ENCODE measurements at regions of chr13 and their contacts with region 1.

Region 1: DNA sequence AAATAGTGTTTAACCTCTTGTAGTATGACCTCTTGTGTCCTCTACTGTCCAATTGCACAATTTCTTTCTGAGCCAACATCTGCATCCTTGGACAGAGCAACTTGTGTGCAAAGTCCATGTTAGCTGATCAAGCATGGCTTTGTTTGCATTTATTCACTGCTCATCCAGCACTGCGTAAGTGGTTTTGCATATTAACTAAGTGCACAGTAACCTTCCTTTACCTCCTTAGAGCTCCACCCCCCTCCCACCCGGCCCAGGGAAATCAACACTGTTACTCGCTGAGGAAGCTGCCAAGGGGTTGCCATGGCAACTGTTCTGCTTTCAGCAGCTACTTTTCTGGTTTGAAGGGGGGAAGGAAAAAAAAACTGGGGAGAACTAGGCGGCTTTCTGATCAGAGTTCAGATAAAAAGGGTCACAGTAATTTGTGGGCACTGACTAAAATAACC is 153.5 kb upstream of the KLF12 start:
- DNase-seq: peak in 1 of 2 experiments; percentile 14
- H3K4me3 ChIP-seq: no peak overlapping the region
- H3K27ac ChIP-seq: no peak overlapping the region
- H3K4me1 ChIP-seq: no peaks in the 10 kb centered on the region
- H3K27me3 ChIP-seq: no peaks in the 10 kb centered on the region
- CTCF ChIP-seq: no peak

Region 2: GRCh38 chr13:73081256-73081915 is 1206.4 kb before region 1 on chr13:
- CTCF ChIA-PET with region 1: interaction called, 11 read pairs
- POLR2A ChIA-PET with region 1: no interaction called
- intact Hi-C with region 1: no loop called
- DNase-seq: no peak
- H3K4me3 ChIP-seq: no peak overlapping the region
- H3K27ac ChIP-seq: 0 out of 2 replicates have a peak overlapping the region, but pooled peaks have one; percentile 17
- H3K4me1 ChIP-seq: no peaks in the 10 kb centered on the region
- H3K27me3 ChIP-seq: no peaks in the 10 kb centered on the region
- CTCF ChIP-seq: no peak

Region 3: GRCh38 chr13:73835138-73835721 is 452.5 kb before region 1 on chr13:
- CTCF ChIA-PET with region 1: interaction called, 7 read pairs
- POLR2A ChIA-PET with region 1: no interaction called
- intact Hi-C with region 1: loop called (anchors 1 kb)
- DNase-seq: no peak
- H3K4me3 ChIP-seq: no peak overlapping the region
- H3K27ac ChIP-seq: no peak overlapping the region
- H3K4me1 ChIP-seq: no peaks in the 10 kb centered on the region
- H3K27me3 ChIP-seq: no peaks in the 10 kb centered on the region
- CTCF ChIP-seq: peak; percentile 79

Region 4: DNA sequence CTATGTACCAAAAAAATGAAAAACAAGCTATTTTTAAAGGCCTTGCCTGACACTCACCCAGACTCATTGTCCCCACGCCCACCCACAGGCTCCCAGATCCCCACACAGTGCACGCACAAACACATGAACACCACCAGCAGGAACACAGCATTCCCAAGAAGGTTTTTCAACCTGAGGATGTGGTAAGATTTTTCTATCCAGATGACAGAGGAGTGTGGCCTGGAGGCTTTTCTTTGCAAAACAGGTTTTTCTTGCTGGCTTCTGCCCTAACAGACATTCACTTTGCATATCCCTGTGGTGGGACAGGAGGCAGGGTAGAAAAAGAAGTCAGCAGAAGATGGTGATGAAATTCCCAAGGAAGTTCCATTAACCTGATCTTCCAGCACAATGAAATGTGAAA is 251.4 kb before region 1 on chr13:
- CTCF ChIA-PET with region 1: no interaction called
- POLR2A ChIA-PET with region 1: no interaction called
- intact Hi-C with region 1: loop called (anchors 5 kb)
- DNase-seq: peak; percentile 69 to 73
- H3K4me3 ChIP-seq: no peak overlapping the region
- H3K27ac ChIP-seq: no peak overlapping the region
- H3K4me1 ChIP-seq: peaks cover 8% of the 10 kb centered on the region
- H3K27me3 ChIP-seq: no peaks in the 10 kb centered on the region
- CTCF ChIP-seq: no peak

Region 5: GRCh38 chr13:75219479-75220237 is 931.9 kb after region 1 on chr13:
- CTCF ChIA-PET with region 1: no interaction called
- POLR2A ChIA-PET with region 1: no interaction called
- intact Hi-C with region 1: loop called (anchors 5 kb)
- DNase-seq: peak in 1 of 2 experiments; percentile 76
- H3K4me3 ChIP-seq: no peak overlapping the region
- H3K27ac ChIP-seq: no peak overlapping the region
- H3K4me1 ChIP-seq: no peaks in the 10 kb centered on the region
- H3K27me3 ChIP-seq: no peaks in the 10 kb centered on the region
- CTCF ChIP-seq: peak; percentile 92